ENCODE measurements at regions of chrX and their contacts with region 1.

Region 1: DNA sequence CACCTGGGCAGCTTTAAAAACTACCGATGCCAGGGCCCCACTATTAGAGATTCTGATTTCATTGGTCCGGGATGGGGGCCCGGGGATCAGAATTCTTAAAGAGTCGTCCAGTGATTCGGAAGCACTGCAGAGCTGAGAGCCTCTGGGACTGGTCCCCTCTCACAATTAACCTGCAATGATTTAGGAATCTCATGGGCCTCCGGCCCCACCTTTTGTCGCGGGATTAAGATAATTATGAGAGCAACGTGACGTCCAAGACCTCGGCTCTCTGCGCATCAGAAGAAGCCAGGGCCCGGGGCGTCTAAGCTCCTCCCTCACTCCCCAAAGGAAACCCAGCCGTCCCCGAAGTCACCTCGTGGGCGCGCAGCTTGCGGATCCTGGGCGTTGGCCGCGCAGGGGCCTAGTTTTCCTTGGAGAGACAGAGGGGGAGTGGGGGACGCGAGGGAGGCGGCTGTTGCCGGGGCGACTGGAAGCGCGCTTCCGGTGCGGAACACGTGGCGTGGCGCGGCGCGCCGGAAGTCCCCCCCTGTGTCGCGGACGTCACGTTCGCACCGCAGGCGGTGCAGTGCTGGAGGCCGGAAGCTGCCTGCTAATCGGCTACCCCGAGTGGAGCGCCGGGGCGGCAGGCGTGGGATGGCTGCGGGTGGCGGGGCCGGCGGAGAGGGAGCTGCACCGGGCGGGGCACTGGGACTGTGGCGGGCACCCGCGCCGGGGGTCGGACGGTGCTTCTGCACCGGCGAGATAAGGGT is at the start of gene GEMIN8:
- DNase-seq: peak; percentile 90
- ATAC-seq: peak; percentile 75
- H3K4me3 Mint-ChIP-seq: peak within 1 kb of the TSS; percentile 87
- H3K27ac Mint-ChIP-seq: peak within 1 kb of the TSS; percentile 100
- H3K4me1 Mint-ChIP-seq: peaks cover 40% of the 10 kb centered on the region
- H3K27me3 Mint-ChIP-seq: peaks cover 2% of the 10 kb centered on the region
- total RNA-seq, gene GEMIN8: 14.9 to 15.6 TPM

Region 2: DNA sequence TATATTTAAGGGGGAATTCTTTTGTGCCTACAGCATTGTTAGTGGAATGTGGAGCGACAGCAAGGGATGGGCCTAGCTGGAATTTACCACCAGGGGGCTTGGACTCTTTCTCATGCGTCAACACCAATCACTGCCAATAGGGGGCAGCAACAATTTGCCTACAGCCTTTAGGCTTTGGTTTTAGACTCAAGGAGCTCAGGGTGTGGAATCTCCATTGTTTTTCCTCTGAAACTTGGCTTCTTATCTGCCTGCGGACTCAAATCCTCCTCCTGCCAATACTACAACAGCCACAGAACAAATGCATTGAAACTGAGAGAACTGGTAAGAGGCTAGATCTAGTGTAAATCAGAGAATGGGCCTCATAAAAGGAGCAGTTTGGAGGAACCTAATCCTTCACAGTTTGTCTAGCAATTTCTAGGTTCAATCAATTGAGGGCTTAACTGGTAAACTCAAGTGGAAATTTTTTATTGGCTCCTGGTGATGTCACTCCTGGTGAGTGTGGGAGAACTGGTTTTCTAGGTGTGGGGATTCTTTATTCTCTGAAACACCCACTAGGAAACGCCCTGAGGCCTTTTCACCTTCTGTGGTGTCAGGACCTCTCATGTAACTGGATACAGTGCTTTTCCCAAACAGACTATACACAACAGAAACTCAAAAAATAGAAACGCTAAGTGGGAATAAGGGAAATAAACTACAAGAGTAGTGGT is 1082.6 kb before region 1 on chrX:
- CTCF ChIA-PET with region 1: interaction called, 3 read pairs
- POLR2A ChIA-PET with region 1: no interaction called
- intact Hi-C with region 1: loop called in 1 of 2 experiments (anchors 2 kb)
- DNase-seq: peak; percentile 81
- ATAC-seq: peak; percentile 11
- H3K4me3 Mint-ChIP-seq: peak overlapping the region; percentile 38
- H3K27ac Mint-ChIP-seq: peak overlapping the region; percentile 94
- H3K4me1 Mint-ChIP-seq: peaks cover 54% of the 10 kb centered on the region
- H3K27me3 Mint-ChIP-seq: no peaks in the 10 kb centered on the region

Region 3: GRCh38 chrX:13212191-13212651 is 817.4 kb before region 1 on chrX:
- CTCF ChIA-PET with region 1: no interaction called
- POLR2A ChIA-PET with region 1: no interaction called
- intact Hi-C with region 1: no loop called
- DNase-seq: no peak
- ATAC-seq: no peak
- H3K4me3 Mint-ChIP-seq: no peak overlapping the region
- H3K27ac Mint-ChIP-seq: no peak overlapping the region
- H3K4me1 Mint-ChIP-seq: peaks cover 5% of the 10 kb centered on the region
- H3K27me3 Mint-ChIP-seq: no peaks in the 10 kb centered on the region

Region 4: GRCh38 chrX:13653022-13653693 is 376.4 kb before region 1 on chrX and contains the start of gene TCEANC:
- CTCF ChIA-PET with region 1: no interaction called
- POLR2A ChIA-PET with region 1: no interaction called
- intact Hi-C with region 1: loop called (anchors 1 to 2 kb)
- DNase-seq: peak; percentile 96
- ATAC-seq: peak; percentile 96
- H3K4me3 Mint-ChIP-seq: peak within 1 kb of the TSS; percentile 81
- H3K27ac Mint-ChIP-seq: peak within 1 kb of the TSS; percentile 90
- H3K4me1 Mint-ChIP-seq: peaks cover 12% of the 10 kb centered on the region
- H3K27me3 Mint-ChIP-seq: no peaks in the 10 kb centered on the region
- total RNA-seq, gene TCEANC: 1.9 to 2.3 TPM

Region 5: DNA sequence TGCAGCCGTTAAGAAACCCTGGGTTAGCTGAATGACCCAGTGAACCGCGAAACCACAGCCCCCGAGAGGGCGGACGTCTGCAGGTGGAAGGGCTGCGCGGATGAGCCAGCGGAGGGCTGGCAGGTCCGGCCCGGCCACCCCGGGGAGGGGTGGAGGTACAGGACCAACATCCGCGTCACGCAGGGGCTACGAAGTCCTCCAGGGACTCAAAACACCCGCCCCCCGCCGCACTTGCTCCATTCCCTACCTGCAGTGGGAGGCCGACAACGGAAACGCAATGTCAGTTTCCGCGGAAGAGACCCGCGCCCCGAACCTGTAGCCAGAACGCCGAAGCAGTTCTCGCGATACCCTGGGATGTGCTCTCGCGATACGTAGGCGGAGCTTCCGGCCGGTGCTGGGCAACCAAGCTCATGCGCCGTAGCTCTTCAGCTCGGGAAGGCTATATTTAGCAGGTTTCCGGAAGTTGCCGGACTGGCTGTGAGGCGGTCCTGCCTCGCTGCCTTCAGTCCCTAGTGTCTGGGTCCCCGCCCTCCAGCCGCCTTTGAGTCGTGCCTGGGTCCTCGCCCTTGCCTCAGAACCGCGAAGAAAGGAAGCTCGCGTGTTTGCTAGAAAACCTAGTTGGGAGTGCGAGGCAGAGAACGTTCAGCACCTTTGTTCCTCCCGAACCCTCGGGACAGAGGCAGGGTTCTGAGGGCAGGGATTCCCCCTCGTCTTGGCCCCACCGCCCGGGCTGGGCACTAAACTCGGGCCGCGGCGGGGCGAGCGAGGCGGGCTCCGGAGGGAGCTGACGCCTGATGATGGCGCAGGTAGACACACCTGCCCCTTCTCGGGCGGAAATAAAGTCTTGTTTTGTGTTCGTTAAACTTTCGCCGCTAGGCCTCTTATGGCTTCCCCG is 295.1 kb before region 1 on chrX and contains the starts of genes OFD1 and TRAPPC2:
- CTCF ChIA-PET with region 1: interaction called, 4 read pairs
- POLR2A ChIA-PET with region 1: no interaction called
- intact Hi-C with region 1: loop called in 1 of 2 experiments (anchors 1 kb)
- DNase-seq: peak; percentile 93
- ATAC-seq: peak; percentile 95
- H3K4me3 Mint-ChIP-seq: peak within 1 kb of the TSS; percentile 81
- H3K27ac Mint-ChIP-seq: peak within 1 kb of the TSS; percentile 93
- H3K4me1 Mint-ChIP-seq: peaks cover 42% of the 10 kb centered on the region
- H3K27me3 Mint-ChIP-seq: no peaks in the 10 kb centered on the region
- total RNA-seq, gene OFD1: 28.0 to 32.4 TPM
- total RNA-seq, gene TRAPPC2: 10.3 to 16.4 TPM

Region 6: GRCh38 chrX:13898083-13898482 is 131.5 kb before region 1 on chrX:
- CTCF ChIA-PET with region 1: interaction called, 3 read pairs
- POLR2A ChIA-PET with region 1: no interaction called
- intact Hi-C with region 1: loop called (anchors 1 kb)
- DNase-seq: peak; percentile 25
- ATAC-seq: peak; percentile 52
- H3K4me3 Mint-ChIP-seq: no peak overlapping the region
- H3K27ac Mint-ChIP-seq: no peak overlapping the region
- H3K4me1 Mint-ChIP-seq: peaks cover 9% of the 10 kb centered on the region
- H3K27me3 Mint-ChIP-seq: no peaks in the 10 kb centered on the region

Region 7: DNA sequence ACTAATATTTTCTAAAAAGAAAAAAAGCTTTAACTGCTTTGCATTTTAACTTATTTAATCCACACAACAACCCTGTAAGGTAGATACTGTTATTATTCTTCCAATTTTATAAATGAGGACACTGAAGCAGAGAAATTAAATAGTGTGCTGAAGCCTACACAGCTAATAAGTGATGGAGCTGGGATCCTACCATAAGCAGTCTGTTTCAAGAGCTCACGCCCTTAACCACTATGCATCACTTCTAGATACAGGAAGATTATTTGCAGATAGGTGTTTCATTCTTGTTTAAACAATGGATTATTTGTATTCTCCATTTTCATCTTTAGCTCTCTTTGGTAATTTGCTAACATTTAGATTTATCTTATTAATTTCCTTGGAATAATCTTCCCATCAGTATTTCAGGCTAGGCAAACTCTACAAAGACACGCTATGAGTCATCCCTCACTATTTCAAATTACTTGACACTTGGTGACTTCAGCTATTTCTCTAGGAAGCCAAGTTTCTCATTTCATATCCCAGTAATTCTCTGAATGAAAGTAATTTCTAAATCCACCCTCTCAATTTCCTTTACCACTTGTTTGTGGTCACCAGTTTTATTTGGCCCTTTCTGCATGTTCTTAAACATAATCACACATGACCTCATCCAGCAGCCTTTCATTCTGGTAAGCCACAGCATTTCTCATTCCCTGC is 1173.0 kb after region 1 on chrX:
- CTCF ChIA-PET with region 1: no interaction called
- POLR2A ChIA-PET with region 1: no interaction called
- intact Hi-C with region 1: loop called in 1 of 2 experiments (anchors 2 kb)
- DNase-seq: no peak
- ATAC-seq: peak; percentile 45
- H3K4me3 Mint-ChIP-seq: no peak overlapping the region
- H3K27ac Mint-ChIP-seq: no peak overlapping the region
- H3K4me1 Mint-ChIP-seq: peaks cover 42% of the 10 kb centered on the region
- H3K27me3 Mint-ChIP-seq: peaks cover 8% of the 10 kb centered on the region

Measured in activated CD4-positive, alpha-beta T cell treated with anti-CD3 and anti-CD28 coated beads for 36 hours (primary cell).